ENCODE measurements at regions of chr7 and their contacts with region 1.

Region 1: DNA sequence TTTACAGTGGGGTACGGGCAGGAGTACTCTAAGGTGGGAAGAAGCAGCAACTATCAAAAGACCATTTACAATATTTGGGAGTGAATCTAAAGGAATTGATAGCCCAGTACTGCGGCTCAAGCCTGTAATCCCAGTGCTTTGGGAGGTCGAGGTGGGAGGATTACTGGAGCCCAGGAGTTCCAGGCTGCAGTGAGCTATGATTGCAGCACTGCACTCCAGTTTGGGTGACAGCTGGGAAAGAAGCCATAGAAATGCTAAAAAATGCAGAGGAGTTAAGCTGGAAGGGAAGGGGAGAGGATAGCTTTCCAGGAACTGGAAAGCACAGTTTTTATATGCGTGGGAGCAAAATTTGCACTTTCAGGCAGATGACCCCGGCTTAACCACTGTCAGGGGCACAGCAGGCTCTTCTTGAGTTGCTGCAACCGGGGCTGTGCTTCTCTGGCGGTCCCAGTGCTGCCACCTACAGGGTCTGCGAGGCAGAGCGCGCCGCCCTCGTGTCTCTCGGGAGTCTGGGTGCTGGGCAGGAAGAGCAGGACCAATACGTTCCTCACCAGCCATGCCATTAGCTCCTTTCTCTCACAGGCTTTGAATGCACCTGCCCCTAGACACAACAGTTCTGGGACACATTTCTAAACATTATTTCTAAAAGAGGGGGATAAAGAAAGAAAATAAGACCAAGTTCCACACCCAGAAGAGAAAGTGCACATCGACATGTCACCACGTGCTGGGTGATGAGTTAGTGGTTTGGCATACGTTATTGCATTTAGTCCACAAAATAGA is 10.1 kb upstream of the BMPER start:
- DNase-seq: no peak
- H3K4me3 ChIP-seq: no peak overlapping the region
- H3K27ac ChIP-seq: no peak overlapping the region
- H3K4me1 ChIP-seq: no peaks in the 10 kb centered on the region
- H3K27me3 ChIP-seq: no peaks in the 10 kb centered on the region
- CTCF ChIP-seq: peak; percentile 55 to 79 (median 78)
- POLR2A ChIP-seq: no peak

Region 2: GRCh38 chr7:33757562-33758165 is 137.6 kb before region 1 on chr7:
- intact Hi-C with region 1: loop called (anchors 10 kb)
- DNase-seq: no peak
- H3K4me3 ChIP-seq: no peak overlapping the region
- H3K27ac ChIP-seq: no peak overlapping the region
- H3K4me1 ChIP-seq: peaks cover 6% of the 10 kb centered on the region
- H3K27me3 ChIP-seq: no peaks in the 10 kb centered on the region
- CTCF ChIP-seq: peak; percentile 32 to 57 (median 51)
- POLR2A ChIP-seq: no peak